ENCODE measurements at regions of chr5 and their contacts with region 1.

Region 1: DNA sequence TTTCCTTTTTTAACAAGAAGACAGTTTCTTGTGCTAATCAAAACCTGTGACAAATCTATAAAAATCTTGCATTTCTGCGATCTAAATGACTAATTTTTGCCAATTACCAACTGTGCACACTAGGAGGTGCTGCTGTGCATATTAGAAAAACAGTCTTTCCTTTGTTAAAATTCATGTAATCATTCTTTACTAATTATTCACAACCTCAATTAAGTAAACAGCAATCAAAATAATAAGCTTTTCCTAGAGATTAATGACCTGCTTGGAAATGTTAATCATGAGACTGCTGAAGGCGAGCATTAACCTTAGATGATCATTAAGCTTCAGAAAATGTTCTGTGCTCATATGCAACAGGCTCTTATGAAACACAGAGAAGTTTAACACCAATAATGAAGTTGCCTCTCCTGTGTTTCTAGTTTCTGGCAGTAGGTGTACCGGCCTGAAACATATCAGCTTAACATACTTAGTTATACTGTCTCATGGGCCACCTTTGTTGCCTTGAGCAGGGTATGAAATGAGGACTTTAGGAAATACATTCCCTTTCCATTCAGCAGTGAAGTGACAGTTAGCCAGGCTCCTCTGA is 17.7 kb downstream of the RFESD start:
- DNase-seq: peak in 1 of 2 experiments; percentile 23
- H3K4me3 ChIP-seq: no peak overlapping the region
- H3K4me3 Mint-ChIP-seq: no peak overlapping the region
- H3K27ac Mint-ChIP-seq: no peak overlapping the region
- H3K4me1 ChIP-seq: 0 out of 2 replicates have a peak, but pooled peaks cover 4% of the 10 kb centered on the region
- H3K4me1 Mint-ChIP-seq: no peaks in the 10 kb centered on the region
- H3K27me3 ChIP-seq: no peaks in the 10 kb centered on the region
- H3K27me3 Mint-ChIP-seq: no peaks in the 10 kb centered on the region
- CTCF ChIP-seq: peak; percentile 78 to 81

Region 2: GRCh38 chr5:95712347-95712958 is 48.2 kb after region 1 on chr5:
- CTCF ChIA-PET with region 1: interaction called, 3 read pairs
- POLR2A ChIA-PET with region 1: no interaction called
- intact Hi-C with region 1: loop called (anchors 1 kb)
- DNase-seq: peak; percentile 83 to 95
- H3K4me3 ChIP-seq: no peak overlapping the region
- H3K4me3 Mint-ChIP-seq: peak overlapping the region; percentile 52
- H3K27ac Mint-ChIP-seq: peak overlapping the region; percentile 98
- H3K4me1 ChIP-seq: peaks cover 61% of the 10 kb centered on the region
- H3K4me1 Mint-ChIP-seq: peaks cover 46% of the 10 kb centered on the region
- H3K27me3 ChIP-seq: no peaks in the 10 kb centered on the region
- H3K27me3 Mint-ChIP-seq: no peaks in the 10 kb centered on the region
- CTCF ChIP-seq: no peak

Region 3: GRCh38 chr5:95759634-95760033 is 95.3 kb after region 1 on chr5:
- CTCF ChIA-PET with region 1: no interaction called
- POLR2A ChIA-PET with region 1: no interaction called
- intact Hi-C with region 1: loop called (anchors 2 kb)
- DNase-seq: peak; percentile 49 to 56
- H3K4me3 ChIP-seq: no peak overlapping the region
- H3K4me3 Mint-ChIP-seq: no peak overlapping the region
- H3K27ac Mint-ChIP-seq: peak overlapping the region; percentile 67
- H3K4me1 ChIP-seq: peaks cover 30% of the 10 kb centered on the region
- H3K4me1 Mint-ChIP-seq: peaks cover 14% of the 10 kb centered on the region
- H3K27me3 ChIP-seq: no peaks in the 10 kb centered on the region
- H3K27me3 Mint-ChIP-seq: no peaks in the 10 kb centered on the region
- CTCF ChIP-seq: no peak

Region 4: DNA sequence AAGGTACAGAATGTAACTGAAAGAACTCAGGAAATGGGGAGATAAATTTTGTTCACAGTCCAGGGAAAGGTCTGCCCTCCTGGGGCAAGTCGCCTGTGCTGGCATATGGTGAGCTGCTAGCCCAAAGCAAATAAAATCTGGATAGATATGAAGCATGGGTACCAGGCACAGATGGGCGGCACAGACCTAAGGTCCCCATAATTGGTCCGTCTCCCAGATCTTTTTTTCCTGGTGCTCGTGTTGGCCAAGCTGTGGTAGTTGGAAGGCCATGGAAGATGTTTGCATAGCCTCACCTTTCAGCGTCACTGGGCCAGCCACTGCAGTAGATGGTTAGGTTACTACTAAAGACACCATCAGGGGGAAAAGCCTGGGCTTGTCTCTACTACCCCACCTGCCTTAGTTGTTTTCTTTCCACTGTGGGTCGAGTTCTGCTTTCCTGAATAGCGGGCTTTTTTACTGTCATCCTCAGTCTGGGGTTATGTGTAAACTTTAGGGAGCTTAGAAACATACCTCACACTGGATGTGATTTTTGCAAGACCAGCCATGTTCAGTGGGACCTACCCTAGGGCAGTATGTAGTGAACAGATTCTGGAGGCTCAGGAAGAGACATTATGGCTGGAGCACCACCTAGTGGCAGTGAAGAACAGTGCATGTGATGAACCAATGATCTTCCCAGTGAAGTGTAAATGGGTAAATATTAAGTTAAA is 182.4 kb after region 1 on chr5:
- CTCF ChIA-PET with region 1: no interaction called
- POLR2A ChIA-PET with region 1: no interaction called
- intact Hi-C with region 1: loop called (anchors 1 kb)
- DNase-seq: peak; percentile 66 to 78
- H3K4me3 ChIP-seq: no peak overlapping the region
- H3K4me3 Mint-ChIP-seq: no peak overlapping the region
- H3K27ac Mint-ChIP-seq: no peak overlapping the region
- H3K4me1 ChIP-seq: no peaks in the 10 kb centered on the region
- H3K4me1 Mint-ChIP-seq: no peaks in the 10 kb centered on the region
- H3K27me3 ChIP-seq: no peaks in the 10 kb centered on the region
- H3K27me3 Mint-ChIP-seq: no peaks in the 10 kb centered on the region
- CTCF ChIP-seq: peak; percentile 91 to 92